ENCODE measurements at regions of chr10 and their contacts with region 1.

Region 1: DNA sequence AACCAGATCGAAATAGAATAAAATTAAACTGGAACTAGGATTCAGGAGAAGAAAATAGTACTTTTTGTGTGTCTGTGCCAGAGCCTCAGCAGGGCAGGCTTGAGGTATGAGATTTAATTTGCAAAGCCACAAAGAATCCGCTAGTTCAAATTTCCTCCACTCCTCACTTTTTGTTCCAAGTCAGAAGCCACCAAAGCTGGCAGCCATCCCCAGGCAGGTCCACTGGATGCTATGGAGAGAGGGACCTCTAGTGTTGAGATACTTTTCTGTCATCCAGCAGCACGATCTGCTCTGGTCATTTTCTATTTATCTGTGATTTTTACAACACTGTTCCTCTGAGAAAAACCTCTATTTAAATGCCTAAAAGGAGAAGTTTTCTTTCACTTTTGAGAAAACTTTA is 147.9 kb upstream of the FRMD4A start:
- DNase-seq: peak; percentile 58
- ATAC-seq: peak; percentile 70
- H3K4me3 Mint-ChIP-seq: no peak overlapping the region
- H3K27ac Mint-ChIP-seq: no peak overlapping the region
- H3K4me1 Mint-ChIP-seq: no peaks in the 10 kb centered on the region
- H3K27me3 Mint-ChIP-seq: peaks cover 8% of the 10 kb centered on the region

Region 2: GRCh38 chr10:13795653-13796555 is 682.7 kb before region 1 on chr10:
- CTCF ChIA-PET with region 1: no interaction called
- POLR2A ChIA-PET with region 1: no interaction called
- intact Hi-C with region 1: loop called in 1 of 2 experiments (anchors 5 kb)
- DNase-seq: no peak
- ATAC-seq: no peak
- H3K4me3 Mint-ChIP-seq: no peak overlapping the region
- H3K27ac Mint-ChIP-seq: no peak overlapping the region
- H3K4me1 Mint-ChIP-seq: peaks cover 26% of the 10 kb centered on the region
- H3K27me3 Mint-ChIP-seq: no peaks in the 10 kb centered on the region

Region 3: DNA sequence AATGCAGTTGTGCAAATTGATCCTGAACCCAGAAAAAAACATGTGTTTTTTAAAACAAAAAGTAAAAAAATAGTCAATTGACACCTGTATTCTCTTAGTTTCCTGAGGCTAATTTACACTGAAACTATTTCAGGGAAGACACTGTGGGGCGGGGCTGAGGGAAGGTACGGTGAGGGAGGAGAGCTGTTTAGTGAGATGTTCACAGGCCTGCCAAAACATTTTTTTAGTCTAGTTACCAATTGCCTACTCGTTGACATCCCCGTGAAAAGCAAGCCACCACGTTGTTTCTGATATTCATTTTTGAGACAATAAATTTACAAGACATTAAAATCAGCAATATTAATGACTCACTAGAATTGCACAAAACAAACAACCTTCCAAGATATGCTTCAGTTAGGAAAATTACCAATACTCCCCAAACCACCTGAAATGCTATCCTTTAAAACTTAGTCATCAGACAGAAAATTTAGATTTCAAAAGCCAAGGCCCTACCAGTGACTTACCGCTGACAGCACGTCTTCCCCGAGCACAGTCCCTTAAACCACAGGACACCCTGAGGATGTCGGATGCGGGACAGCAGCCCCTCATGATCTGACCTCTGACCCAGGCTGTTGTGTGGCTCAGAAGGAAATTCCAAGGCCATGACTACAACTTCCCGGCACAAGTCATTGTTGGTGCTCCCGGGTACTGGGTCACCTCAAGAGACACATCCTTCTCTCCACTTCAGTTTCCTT is 612.7 kb before region 1 on chr10:
- CTCF ChIA-PET with region 1: no interaction called
- POLR2A ChIA-PET with region 1: no interaction called
- intact Hi-C with region 1: no loop called
- DNase-seq: no peak
- ATAC-seq: no peak
- H3K4me3 Mint-ChIP-seq: no peak overlapping the region
- H3K27ac Mint-ChIP-seq: no peak overlapping the region
- H3K4me1 Mint-ChIP-seq: peaks cover 26% of the 10 kb centered on the region
- H3K27me3 Mint-ChIP-seq: no peaks in the 10 kb centered on the region

Region 4: DNA sequence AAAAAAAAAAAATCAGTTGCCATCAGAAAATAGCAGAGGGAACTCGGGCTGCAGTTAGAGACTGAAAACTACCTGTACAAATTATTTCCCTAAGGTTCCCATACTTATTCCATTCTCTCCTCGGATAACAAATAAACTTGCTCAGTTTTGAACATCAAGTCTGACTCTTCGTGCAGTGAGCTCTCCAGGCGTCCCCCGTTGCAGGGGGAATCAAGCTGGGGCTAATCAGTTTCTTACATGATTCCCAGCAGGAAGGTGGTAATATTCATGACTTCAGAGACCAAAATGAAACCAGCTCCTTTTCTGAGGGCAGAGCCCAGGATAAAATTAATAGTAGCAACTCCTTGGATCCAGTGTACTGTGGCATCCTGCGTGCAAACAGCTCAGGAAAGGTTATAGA is 283.2 kb before region 1 on chr10:
- CTCF ChIA-PET with region 1: interaction called, 32 read pairs
- POLR2A ChIA-PET with region 1: interaction called, 7 read pairs
- intact Hi-C with region 1: loop called (anchors 1 kb)
- DNase-seq: no peak
- ATAC-seq: no peak
- H3K4me3 Mint-ChIP-seq: no peak overlapping the region
- H3K27ac Mint-ChIP-seq: no peak overlapping the region
- H3K4me1 Mint-ChIP-seq: no peaks in the 10 kb centered on the region
- H3K27me3 Mint-ChIP-seq: peaks cover 14% of the 10 kb centered on the region

Region 5: GRCh38 chr10:14200698-14201544 is 277.7 kb before region 1 on chr10:
- CTCF ChIA-PET with region 1: interaction called, 32 read pairs
- POLR2A ChIA-PET with region 1: no interaction called
- intact Hi-C with region 1: loop called (anchors 1 kb)
- DNase-seq: peak; percentile 41
- ATAC-seq: no peak
- H3K4me3 Mint-ChIP-seq: no peak overlapping the region
- H3K27ac Mint-ChIP-seq: no peak overlapping the region
- H3K4me1 Mint-ChIP-seq: no peaks in the 10 kb centered on the region
- H3K27me3 Mint-ChIP-seq: peaks cover 7% of the 10 kb centered on the region

Measured in activated CD4-positive, alpha-beta T cell treated with anti-CD3 and anti-CD28 coated beads for 36 hours (primary cell).